Common myeloid progenitor, CD34-positive (primary cell): ENCODE measurements at regions of chr2 and their contacts with region 1.

Region 1: DNA sequence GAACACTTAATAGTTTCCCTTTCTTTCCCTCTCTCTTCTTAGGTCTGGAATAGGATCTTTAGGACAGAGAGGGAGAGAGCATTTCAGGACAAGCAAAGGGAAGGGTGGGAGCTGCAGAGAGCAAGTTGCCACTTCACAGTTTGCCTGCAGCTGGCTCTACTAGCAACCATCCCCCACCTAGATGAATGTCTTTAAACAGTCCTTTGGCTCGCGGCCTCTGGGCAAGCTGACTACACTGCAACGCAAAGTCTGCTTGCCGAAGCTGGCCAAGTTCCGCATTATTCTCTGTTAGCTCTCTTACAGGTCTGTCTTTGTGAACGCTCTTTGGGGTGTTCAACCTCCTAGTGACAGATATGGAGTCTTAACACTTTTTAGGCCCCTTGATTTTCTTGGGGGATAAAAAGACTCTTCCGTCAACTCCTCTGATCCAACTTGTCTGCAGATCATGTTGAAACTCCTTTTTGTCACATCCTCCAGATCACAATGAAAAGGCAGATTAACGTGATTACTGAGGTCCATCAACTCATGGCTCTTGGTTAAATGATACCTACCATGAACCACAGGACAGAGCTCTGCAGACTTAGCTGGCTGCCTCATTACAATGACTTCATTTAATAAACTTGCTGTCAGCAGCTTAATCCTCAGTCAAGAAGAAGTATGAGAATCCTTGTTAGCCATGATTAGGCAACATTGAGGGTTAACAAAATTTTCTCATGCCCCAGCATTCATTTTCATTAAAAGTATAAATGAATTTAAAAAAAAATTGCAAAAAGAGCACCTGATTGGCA is 74.6 kb downstream of the SLC4A3 start:
- DNase-seq: no peak
- H3K4me3 ChIP-seq: no peak overlapping the region
- H3K27ac ChIP-seq: no peak overlapping the region
- H3K4me1 ChIP-seq: no peaks in the 10 kb centered on the region
- H3K27me3 ChIP-seq: peaks cover 2 to 20% (median 6%) of the 10 kb centered on the region in 5 experiments

Region 2: DNA sequence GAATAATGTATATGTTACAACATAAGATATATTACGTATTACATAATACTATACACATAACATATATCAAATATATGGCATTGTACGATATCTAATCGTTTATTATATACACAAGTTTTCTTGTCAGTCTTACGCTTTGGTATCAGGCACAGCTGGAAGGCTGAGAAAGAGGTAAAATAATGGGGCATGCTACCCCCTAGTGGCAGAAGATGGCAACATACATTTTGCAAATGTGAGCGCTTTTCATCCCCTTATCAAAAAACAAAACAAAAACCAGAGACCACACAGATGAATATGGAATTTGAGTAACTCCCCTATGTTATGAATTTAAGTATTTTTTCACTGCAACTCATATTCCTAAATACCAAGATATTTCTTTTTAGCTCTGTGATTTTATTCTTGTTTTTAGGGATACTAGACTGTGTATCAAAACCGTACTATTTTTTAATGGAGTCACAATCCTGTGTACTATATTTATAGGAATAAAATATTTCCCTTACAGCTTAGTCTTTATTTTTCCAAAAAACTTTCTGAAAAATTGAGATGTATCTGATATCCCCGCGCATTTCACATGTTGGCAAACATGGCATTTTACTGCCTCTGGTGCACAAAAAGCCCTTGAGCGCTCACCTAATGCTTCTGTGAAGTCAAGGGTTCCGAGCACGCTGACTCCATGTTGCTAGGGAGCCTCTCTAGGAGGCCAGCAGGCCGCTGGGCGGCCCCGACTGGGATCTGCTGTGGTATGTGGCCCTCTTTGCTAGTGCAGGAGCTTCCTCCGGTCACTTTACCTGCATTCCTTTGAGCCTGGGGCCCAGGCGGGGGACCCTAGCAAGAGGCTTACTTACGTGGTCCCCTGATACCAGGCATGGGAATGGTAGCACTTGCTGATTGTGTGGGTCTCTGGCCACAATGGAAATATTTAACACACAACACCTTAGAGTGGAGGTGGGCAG is 12.1 kb before region 1 on chr2:
- CTCF ChIA-PET with region 1: interaction called, 22 read pairs
- POLR2A ChIA-PET with region 1: no interaction called
- DNase-seq: peak; percentile 57 to 84 (median 76)
- H3K4me3 ChIP-seq: no peak overlapping the region
- H3K27ac ChIP-seq: no peak overlapping the region
- H3K4me1 ChIP-seq: peaks cover 0 to 4% (median 0%) of the 10 kb centered on the region in 4 experiments
- H3K27me3 ChIP-seq: peaks cover 0 to 19% (median 13%) of the 10 kb centered on the region in 5 experiments